ENCODE measurements at regions of chr1 and their contacts with region 1.

Region 1: DNA sequence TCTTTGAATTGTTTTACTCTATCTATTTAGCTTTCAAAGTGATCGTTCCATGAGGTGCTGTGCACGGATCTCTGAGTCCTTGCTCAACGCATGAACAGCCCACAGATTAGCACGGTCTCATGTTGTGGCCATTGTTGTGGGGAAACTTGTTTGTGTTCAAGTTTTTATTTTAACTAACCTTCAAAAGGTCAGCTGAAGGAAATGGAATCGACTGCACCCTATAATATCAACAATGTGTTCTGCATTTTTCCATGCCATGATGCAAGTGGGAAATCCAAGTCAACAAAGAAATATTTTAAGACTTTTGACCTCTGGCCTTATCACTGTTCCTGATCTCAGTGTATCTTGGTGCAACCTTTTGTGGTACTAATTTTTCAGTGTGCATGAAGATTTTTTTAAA is 6.1 kb downstream of the SH2D1B start:
- DNase-seq: no peak
- ATAC-seq: no peak
- H3K4me3 ChIP-seq: no peak overlapping the region
- H3K4me3 Mint-ChIP-seq: peak overlapping the region; percentile 98
- H3K27ac ChIP-seq: peak overlapping the region; percentile 1
- H3K27ac Mint-ChIP-seq: peak overlapping the region; percentile 87 to 92
- H3K4me1 ChIP-seq: peaks cover 26% of the 10 kb centered on the region
- H3K4me1 Mint-ChIP-seq: peaks cover 74 to 86% of the 10 kb centered on the region in 2 donors
- H3K27me3 ChIP-seq: no peaks in the 10 kb centered on the region
- H3K27me3 Mint-ChIP-seq: no peaks in the 10 kb centered on the region
- CTCF ChIP-seq: no peak

Region 2: GRCh38 chr1:162303002-162303344 is 102.8 kb before region 1 on chr1:
- intact Hi-C with region 1: no loop called
- DNase-seq: no peak
- ATAC-seq: no peak
- H3K4me3 ChIP-seq: no peak overlapping the region
- H3K4me3 Mint-ChIP-seq: no peak overlapping the region
- H3K27ac ChIP-seq: no peak overlapping the region
- H3K27ac Mint-ChIP-seq: no peak overlapping the region
- H3K4me1 ChIP-seq: peaks cover 5% of the 10 kb centered on the region
- H3K4me1 Mint-ChIP-seq: peaks cover 6 to 12% of the 10 kb centered on the region in 2 donors
- H3K27me3 ChIP-seq: no peaks in the 10 kb centered on the region
- H3K27me3 Mint-ChIP-seq: peaks cover 2 to 3% of the 10 kb centered on the region in 2 donors
- CTCF ChIP-seq: no peak

Region 3: GRCh38 chr1:162421258-162422164 is 15.7 kb after region 1 on chr1:
- intact Hi-C with region 1: loop called (anchors 2 kb)
- DNase-seq: no peak
- ATAC-seq: peak; percentile 33 to 57 (median 47)
- H3K4me3 ChIP-seq: no peak overlapping the region
- H3K4me3 Mint-ChIP-seq: peak overlapping the region; percentile 75
- H3K27ac ChIP-seq: peak overlapping the region; percentile 68
- H3K27ac Mint-ChIP-seq: peak overlapping the region; percentile 88 to 91
- H3K4me1 ChIP-seq: peaks cover 29% of the 10 kb centered on the region
- H3K4me1 Mint-ChIP-seq: peaks cover 50 to 59% of the 10 kb centered on the region in 2 donors
- H3K27me3 ChIP-seq: no peaks in the 10 kb centered on the region
- H3K27me3 Mint-ChIP-seq: no peaks in the 10 kb centered on the region
- CTCF ChIP-seq: no peak

Region 4: DNA sequence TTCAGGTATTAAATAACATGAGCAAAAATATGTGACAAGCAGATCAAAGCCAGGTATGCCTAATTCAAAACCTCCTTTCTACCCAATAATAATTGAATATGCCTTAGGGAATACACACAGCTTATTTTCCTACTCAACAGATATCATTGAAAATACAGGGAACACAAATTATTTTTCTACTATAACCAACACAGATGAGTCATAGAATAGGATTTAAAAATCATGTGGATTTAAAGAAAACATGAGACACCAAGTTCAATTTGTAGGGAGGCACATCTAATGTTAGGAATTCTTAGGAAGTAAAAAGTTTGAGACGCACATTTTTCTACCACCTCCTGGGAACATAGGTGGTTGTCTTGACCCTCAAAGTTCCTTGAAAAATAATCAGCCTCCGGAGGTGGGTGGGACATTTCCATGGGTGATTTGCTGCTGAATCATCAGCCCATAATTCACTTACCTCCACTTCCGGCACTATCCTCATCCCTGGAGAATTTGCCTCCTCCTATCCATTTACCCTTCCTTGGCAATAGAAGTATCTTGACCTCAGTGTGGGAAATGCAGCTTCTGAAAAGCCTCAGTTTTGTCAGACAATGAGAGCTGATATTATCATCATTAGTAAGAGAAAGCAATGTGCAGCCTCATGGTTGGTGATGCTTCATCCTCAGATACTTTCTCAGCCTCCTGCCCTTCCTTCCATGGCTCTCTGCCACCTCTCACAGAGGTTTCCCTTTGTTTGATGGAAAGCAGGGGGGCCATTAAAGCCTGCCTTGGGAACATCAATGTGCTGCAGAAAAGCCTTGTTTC is 629.8 kb after region 1 on chr1:
- intact Hi-C with region 1: no loop called
- DNase-seq: no peak
- ATAC-seq: no peak
- H3K4me3 ChIP-seq: no peak overlapping the region
- H3K4me3 Mint-ChIP-seq: no peak overlapping the region
- H3K27ac ChIP-seq: no peak overlapping the region
- H3K27ac Mint-ChIP-seq: no peak overlapping the region
- H3K4me1 ChIP-seq: no peaks in the 10 kb centered on the region
- H3K4me1 Mint-ChIP-seq: no peaks in the 10 kb centered on the region
- H3K27me3 ChIP-seq: peaks cover 3% of the 10 kb centered on the region
- H3K27me3 Mint-ChIP-seq: peaks cover 9% of the 10 kb centered on the region in 2 donors
- CTCF ChIP-seq: no peak